ENCODE measurements at regions of chr7 and their contacts with region 1.

Region 1: GRCh38 chr7:100705753-100706671 is at the start of gene POP7:
- DNase-seq: peak; percentile 99
- CTCF ChIP-seq: no peak

Region 2: GRCh38 chr7:100516135-100516812 is 189.7 kb before region 1 on chr7:
- CTCF ChIA-PET with region 1: no interaction called
- POLR2A ChIA-PET with region 1: no interaction called
- DNase-seq: peak; percentile 48
- CTCF ChIP-seq: no peak

Region 3: DNA sequence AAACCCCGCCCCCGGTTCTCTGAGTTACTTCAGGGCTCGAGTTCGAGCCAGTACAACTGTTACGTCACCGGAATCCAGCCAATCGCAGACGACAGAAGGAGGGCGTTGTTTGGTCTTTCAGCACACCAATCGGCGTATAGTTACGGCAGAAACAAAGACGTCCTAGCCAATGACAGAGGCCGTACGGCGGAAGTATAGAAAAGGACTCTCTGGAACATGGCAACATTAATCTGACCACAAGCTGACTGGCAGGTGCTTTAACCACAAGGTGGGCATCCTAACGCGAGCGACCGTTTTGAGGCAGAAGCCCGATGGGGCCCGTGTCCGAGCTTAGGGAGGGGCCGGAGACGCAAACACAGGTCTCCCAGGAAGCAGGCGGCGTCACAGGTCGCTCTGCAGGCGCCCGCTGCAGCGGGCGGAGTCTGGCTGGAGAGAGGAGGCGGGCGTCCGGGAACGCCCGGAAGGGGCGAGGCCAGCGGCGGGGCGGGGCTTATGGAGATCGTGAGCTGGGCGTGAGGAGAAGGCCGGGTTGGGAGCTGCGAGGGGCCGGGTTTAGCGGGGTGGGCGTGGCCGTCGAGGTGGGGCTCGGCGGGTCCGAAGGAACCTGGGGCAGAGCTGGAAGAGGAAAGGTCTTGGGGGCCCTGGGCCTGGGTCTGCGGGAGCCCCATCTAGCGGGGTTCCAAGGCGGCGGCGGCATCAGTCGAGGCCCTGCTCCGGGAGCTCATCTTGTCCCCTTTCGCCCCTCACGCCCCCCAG is 93.9 kb before region 1 on chr7 and contains the start of gene MOSPD3:
- CTCF ChIA-PET with region 1: interaction called, 15 read pairs
- POLR2A ChIA-PET with region 1: interaction called, 3 read pairs
- DNase-seq: peak; percentile 99
- CTCF ChIP-seq: no peak

Region 4: DNA sequence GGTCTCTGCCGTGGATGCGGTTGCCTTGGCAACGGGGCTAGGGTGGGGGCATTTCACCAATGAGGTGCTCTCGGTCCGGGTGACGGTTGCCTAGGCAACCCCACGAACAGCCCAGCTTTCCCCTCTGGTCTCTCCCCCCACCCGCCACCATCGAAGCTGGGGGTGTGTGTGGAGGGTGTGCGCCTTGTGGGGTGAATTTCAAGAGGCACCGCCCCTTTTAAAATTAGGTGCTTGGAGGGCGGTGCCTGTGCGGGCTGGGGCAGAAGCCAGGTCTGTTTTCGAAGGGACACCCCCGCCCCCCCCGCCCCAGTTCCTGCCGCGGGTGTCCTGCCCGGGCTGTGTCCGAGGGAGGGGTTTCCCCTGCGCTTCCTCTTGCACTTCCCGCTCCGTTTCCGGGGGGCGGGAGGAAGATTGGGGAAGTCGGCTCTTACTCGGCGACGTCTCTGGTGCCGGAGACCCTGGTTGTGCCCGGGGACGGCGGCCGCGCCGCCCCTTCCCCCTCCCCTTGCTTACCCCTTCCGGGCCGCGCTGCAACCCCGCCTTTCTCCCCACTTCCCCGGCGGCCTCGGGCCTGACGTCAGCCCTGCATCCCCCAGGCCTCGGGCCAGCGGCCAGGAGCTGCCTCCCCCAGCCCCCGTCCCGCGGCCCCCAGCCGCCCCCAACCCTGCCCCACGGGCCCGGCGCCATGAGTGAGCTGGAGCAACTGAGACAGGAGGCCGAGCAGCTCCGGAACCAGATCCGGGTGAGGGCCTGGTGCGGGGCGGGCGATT is 30.2 kb before region 1 on chr7:
- CTCF ChIA-PET with region 1: interaction called, 16 read pairs
- POLR2A ChIA-PET with region 1: no interaction called
- DNase-seq: peak; percentile 83
- CTCF ChIP-seq: no peak

Region 5: DNA sequence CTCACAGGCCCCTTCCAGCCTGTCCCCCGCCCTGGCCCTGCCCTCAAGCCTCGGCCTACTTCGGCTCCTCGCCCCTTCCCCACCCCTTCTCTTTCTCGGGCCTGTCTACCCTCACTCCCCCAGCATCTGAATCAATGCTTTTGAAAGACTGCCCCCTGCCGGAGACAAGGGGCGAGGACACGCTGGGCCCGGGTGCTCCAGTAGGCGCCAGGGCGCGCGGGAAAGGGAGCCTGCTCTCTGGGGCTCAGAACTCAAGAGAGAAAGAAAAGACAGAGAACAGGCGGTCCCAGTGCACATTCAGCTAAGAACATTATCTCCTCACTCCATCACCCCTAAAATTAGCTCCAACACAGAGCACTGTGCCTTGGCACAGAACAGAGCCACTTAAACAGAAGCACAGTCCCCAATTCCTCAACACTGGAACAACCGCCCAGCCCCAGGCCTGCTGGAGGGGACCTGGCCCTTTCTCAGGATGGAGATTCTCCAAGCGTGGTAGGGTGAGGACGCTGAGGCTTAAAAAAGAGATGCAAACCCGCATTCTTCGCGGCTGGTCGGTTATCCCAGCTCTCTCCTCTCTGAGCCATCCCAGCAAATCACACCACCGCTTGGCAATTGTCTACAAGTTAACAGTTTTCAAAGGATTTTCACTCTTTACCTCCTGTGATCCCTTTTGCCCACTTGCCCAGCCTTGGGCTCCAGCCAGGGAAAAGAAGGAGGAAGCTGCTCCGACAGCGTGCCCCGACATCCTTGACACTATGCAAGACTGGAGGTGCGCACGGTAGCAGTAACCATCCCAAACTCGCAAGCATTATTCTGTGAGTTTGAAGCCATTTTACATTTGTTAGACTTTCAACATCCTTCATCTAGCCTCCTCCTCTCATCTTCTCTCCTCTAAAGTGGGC is 14.1 kb before region 1 on chr7:
- CTCF ChIA-PET with region 1: interaction called, 159 read pairs
- POLR2A ChIA-PET with region 1: interaction called, 9 read pairs
- DNase-seq: peak; percentile 87
- CTCF ChIP-seq: peak; percentile 97

Region 6: DNA sequence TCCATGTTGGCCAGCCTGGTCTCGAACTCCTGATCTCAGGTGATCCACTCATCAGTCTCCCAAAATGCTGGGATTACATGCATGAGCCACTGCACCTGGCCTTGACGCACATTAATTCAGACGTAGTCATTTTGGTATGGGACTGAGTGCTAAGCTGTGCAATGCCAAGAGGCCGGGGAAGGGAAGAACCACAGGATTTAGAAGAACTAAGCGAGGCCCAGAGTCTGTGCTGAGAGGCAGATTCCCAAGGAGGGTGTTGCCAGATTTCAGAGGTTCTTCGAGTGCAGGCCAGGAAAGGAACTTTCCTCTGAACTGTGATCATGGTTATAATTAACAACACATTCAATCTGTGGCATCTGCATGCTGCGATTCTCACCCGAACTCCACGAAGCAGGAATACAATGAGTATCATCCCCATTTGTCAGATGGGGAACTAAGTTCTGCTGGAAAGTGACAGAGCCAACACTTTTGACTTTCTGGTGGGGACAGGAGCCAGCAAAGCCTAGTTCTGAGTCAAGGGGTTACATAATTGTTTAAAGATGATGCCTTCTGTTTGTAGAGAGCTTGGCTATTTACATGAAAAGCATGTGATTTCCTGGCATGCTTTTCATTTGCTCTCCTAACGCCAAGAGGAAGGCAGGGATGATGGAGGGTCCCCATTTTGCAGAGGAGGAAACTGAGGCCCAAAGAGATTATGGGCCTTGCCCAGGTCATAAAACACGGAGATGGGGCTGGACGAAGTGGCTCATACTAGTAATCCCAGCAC is 21.2 kb after region 1 on chr7:
- CTCF ChIA-PET with region 1: interaction called, 100 read pairs
- POLR2A ChIA-PET with region 1: no interaction called
- DNase-seq: no peak
- CTCF ChIP-seq: no peak

Region 7: GRCh38 chr7:100852048-100852872 is 146.2 kb after region 1 on chr7 and contains the start of gene SLC12A9:
- CTCF ChIA-PET with region 1: interaction called, 77 read pairs
- POLR2A ChIA-PET with region 1: interaction called, 4 read pairs
- DNase-seq: peak; percentile 96
- CTCF ChIP-seq: peak; percentile 90